Mammary epithelial cell (primary cell): ENCODE measurements at regions of chr7 and their contacts with region 1.

Region 1: GRCh38 chr7:97027427-97028234 is 3.0 kb upstream of the DLX5 start:
- DNase-seq: peak; percentile 59
- H3K4me3 ChIP-seq: peak overlapping the region in 1 of 3 experiments; percentile 12
- H3K27ac ChIP-seq: no peak overlapping the region
- H3K4me1 ChIP-seq: peaks cover 8% of the 10 kb centered on the region
- H3K27me3 ChIP-seq: peaks cover 24% of the 10 kb centered on the region
- CTCF ChIP-seq: peak; percentile 84 to 90

Region 2: GRCh38 chr7:96075510-96076349 is 951.9 kb before region 1 on chr7:
- CTCF ChIA-PET with region 1: no interaction called
- dilution Hi-C with region 1: no loop called
- in situ Hi-C with region 1: no loop called
- intact Hi-C with region 1: loop called (anchors 1 kb)
- DNase-seq: peak; percentile 26
- H3K4me3 ChIP-seq: peak overlapping the region; percentile 50 to 74 (median 61)
- H3K27ac ChIP-seq: no peak overlapping the region
- H3K4me1 ChIP-seq: peaks cover 12% of the 10 kb centered on the region
- H3K27me3 ChIP-seq: no peaks in the 10 kb centered on the region
- CTCF ChIP-seq: peak; percentile 79 to 91

Region 3: DNA sequence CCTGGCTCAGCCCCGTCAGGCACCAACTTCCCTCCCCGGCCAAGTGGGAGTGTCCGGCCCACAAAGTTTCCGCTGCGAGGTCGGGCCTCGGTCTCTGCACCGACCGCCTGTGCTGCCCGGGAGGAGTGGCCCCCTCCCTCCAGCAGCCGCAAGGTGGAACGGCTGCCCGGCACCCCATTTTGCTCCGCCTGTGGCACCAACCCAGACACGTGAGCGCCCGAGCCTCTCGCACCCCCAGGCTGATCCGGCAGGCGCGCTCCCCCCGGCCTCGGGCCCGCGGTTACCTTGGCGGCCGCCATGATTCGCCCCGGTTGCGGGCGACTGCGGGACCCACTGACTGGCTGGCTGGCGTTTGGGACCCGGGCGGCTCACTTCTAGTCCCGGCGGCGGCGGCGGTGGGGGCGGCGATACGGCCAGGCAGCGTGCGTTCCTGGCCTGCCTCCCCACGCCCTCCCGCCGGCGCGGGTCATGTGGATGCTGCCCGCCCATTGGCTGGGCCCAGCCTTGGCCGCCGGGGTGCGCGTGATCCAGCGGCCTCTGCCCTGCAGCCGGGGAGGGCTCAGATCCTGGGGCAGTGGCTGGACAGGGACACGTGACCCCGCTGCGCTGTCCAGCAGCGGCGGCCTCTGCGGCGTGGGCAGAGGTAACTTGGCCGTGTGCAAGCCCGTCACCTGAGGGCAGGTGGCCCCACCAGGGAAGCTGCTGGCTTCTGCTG is 705.8 kb before region 1 on chr7 and contains the start of gene SLC25A13:
- CTCF ChIA-PET with region 1: no interaction called
- dilution Hi-C with region 1: no loop called
- in situ Hi-C with region 1: no loop called
- intact Hi-C with region 1: loop called (anchors 10 kb)
- DNase-seq: peak; percentile 81
- H3K4me3 ChIP-seq: peak within 1 kb of the TSS; percentile 78 to 95 (median 81)
- H3K27ac ChIP-seq: peak within 1 kb of the TSS; percentile 85
- H3K4me1 ChIP-seq: peaks cover 5% of the 10 kb centered on the region
- H3K27me3 ChIP-seq: no peaks in the 10 kb centered on the region
- CTCF ChIP-seq: no peak
- total RNA-seq, gene SLC25A13: 31.5 to 33.7 TPM

Region 4: GRCh38 chr7:96596120-96596826 is 431.4 kb before region 1 on chr7:
- CTCF ChIA-PET with region 1: no interaction called
- dilution Hi-C with region 1: no loop called
- in situ Hi-C with region 1: no loop called
- intact Hi-C with region 1: loop called (anchors 1 kb)
- DNase-seq: peak; percentile 23
- H3K4me3 ChIP-seq: no peak overlapping the region
- H3K27ac ChIP-seq: no peak overlapping the region
- H3K4me1 ChIP-seq: no peaks in the 10 kb centered on the region
- H3K27me3 ChIP-seq: peaks cover 3% of the 10 kb centered on the region
- CTCF ChIP-seq: peak; percentile 13 to 61

Region 5: GRCh38 chr7:96778263-96778662 is 249.4 kb before region 1 on chr7:
- CTCF ChIA-PET with region 1: interaction called, 6 read pairs
- dilution Hi-C with region 1: no loop called
- in situ Hi-C with region 1: no loop called
- intact Hi-C with region 1: loop called (anchors 1 kb)
- DNase-seq: peak; percentile 25
- H3K4me3 ChIP-seq: no peak overlapping the region
- H3K27ac ChIP-seq: no peak overlapping the region
- H3K4me1 ChIP-seq: no peaks in the 10 kb centered on the region
- H3K27me3 ChIP-seq: peaks cover 3% of the 10 kb centered on the region
- CTCF ChIP-seq: peak; percentile 48 to 68

Region 6: GRCh38 chr7:97457054-97457453 is 429.4 kb after region 1 on chr7:
- CTCF ChIA-PET with region 1: no interaction called
- dilution Hi-C with region 1: no loop called
- in situ Hi-C with region 1: no loop called
- intact Hi-C with region 1: no loop called
- DNase-seq: no peak
- H3K4me3 ChIP-seq: no peak overlapping the region
- H3K27ac ChIP-seq: no peak overlapping the region
- H3K4me1 ChIP-seq: no peaks in the 10 kb centered on the region
- H3K27me3 ChIP-seq: no peaks in the 10 kb centered on the region
- CTCF ChIP-seq: no peak